ENCODE measurements at regions of chr7 and their contacts with region 1.

Region 1: DNA sequence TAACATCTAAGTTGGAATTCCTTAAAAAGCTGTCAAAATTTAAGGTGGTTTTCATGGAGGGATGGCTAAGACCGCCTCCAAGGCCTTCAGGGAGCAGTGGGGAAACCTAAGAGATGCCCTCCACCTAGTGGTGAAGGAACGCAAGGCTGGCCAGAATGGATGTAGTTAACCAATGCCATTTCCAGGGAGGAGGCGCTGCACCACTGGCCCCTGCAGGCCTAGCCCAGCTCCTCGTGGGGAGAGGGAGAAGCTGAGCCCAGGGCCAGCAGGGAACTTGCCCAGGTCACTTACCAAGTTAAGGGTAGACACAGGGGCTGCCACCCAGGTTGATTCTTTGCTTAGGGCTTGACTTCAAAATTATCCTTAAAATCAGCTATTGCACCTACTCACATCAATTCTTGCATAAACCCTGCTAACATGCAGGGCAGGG is 32.0 kb downstream of the FIGNL1 start:
- DNase-seq: peak; percentile 75 to 82
- H3K4me3 ChIP-seq: no peak overlapping the region
- H3K27ac ChIP-seq: no peak overlapping the region
- H3K4me1 ChIP-seq: peaks cover 0 to 8% (median 4%) of the 10 kb centered on the region in 4 experiments; a peak in 5 of 7 replicates
- H3K27me3 ChIP-seq: no peaks in the 10 kb centered on the region; a peak in 1 of 7 replicates
- CTCF ChIP-seq: peak; percentile 87 to 99 (median 98)
- EP300 ChIP-seq: no peak
- POLR2A ChIP-seq: no peak
- RAD21 ChIP-seq: peak; percentile 92 to 94

Region 2: GRCh38 chr7:50206453-50207250 is 211.4 kb before region 1 on chr7:
- CTCF ChIA-PET with region 1: interaction called, 36 read pairs
- POLR2A ChIA-PET with region 1: no interaction called
- DNase-seq: no peak
- H3K4me3 ChIP-seq: no peak overlapping the region
- H3K27ac ChIP-seq: no peak overlapping the region
- H3K4me1 ChIP-seq: no peaks in the 10 kb centered on the region
- H3K27me3 ChIP-seq: no peaks in the 10 kb centered on the region; a peak in 1 of 7 replicates
- CTCF ChIP-seq: no peak
- EP300 ChIP-seq: no peak
- POLR2A ChIP-seq: no peak
- RAD21 ChIP-seq: no peak

Region 3: GRCh38 chr7:50369143-50370026 is 48.7 kb before region 1 on chr7:
- CTCF ChIA-PET with region 1: interaction called, 22 read pairs
- POLR2A ChIA-PET with region 1: no interaction called
- DNase-seq: no peak
- H3K4me3 ChIP-seq: no peak overlapping the region
- H3K27ac ChIP-seq: no peak overlapping the region
- H3K4me1 ChIP-seq: no peaks in the 10 kb centered on the region
- H3K27me3 ChIP-seq: no peaks in the 10 kb centered on the region
- CTCF ChIP-seq: peak; percentile 49 to 91 (median 84)
- EP300 ChIP-seq: no peak
- POLR2A ChIP-seq: no peak
- RAD21 ChIP-seq: peak; percentile 96

Region 4: GRCh38 chr7:50379082-50379481 is 39.0 kb before region 1 on chr7:
- CTCF ChIA-PET with region 1: interaction called, 11 read pairs
- POLR2A ChIA-PET with region 1: no interaction called
- DNase-seq: peak; percentile 51 to 62
- H3K4me3 ChIP-seq: peak overlapping the region in 3 of 4 experiments; percentile 29 to 43 (median 40); a peak in 5 of 8 replicates
- H3K27ac ChIP-seq: peak overlapping the region; percentile 82; the same call in 1 of the 2 replicates
- H3K4me1 ChIP-seq: peaks cover 6 to 27% (median 19%) of the 10 kb centered on the region in 4 experiments
- H3K27me3 ChIP-seq: no peaks in the 10 kb centered on the region
- CTCF ChIP-seq: no peak
- EP300 ChIP-seq: no peak
- POLR2A ChIP-seq: peak; percentile 57 to 76
- RAD21 ChIP-seq: no peak

Region 5: GRCh38 chr7:50404392-50404791 is 13.7 kb before region 1 on chr7:
- CTCF ChIA-PET with region 1: interaction called, 50 read pairs
- POLR2A ChIA-PET with region 1: no interaction called
- DNase-seq: no peak
- H3K4me3 ChIP-seq: no peak overlapping the region
- H3K27ac ChIP-seq: no peak overlapping the region
- H3K4me1 ChIP-seq: no peaks in the 10 kb centered on the region
- H3K27me3 ChIP-seq: no peaks in the 10 kb centered on the region; a peak in 1 of 7 replicates
- CTCF ChIP-seq: peak; percentile 23 to 47 (median 45); a peak in 3 of 4 replicates
- EP300 ChIP-seq: no peak
- POLR2A ChIP-seq: no peak
- RAD21 ChIP-seq: no peak; a peak in 2 of 4 replicates

Region 6: DNA sequence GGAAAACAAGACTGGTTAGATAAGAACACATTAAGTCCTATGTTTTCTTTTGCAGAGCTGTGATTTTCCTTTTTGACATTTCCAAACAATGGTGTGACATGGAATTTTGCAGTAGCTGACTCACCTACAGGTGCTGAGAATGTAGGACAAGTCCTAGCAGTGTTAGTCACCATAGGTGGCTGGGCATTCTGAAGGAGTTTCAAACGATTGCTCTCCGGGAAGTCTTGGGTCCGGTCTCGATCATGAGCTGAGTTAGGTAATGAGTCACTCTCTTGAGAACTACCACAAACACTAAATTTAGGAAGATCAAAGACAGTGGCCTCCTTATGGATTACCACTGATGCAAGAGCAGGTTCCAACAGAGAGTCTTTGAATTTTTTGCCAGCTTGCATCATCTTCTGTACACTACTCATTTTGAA is 28.4 kb after region 1 on chr7:
- CTCF ChIA-PET with region 1: interaction called, 18 read pairs
- POLR2A ChIA-PET with region 1: no interaction called
- DNase-seq: no peak
- H3K4me3 ChIP-seq: no peak overlapping the region
- H3K27ac ChIP-seq: no peak overlapping the region
- H3K4me1 ChIP-seq: peaks cover 2 to 5% (median 3%) of the 10 kb centered on the region in 4 experiments; a peak in 6 of 7 replicates
- H3K27me3 ChIP-seq: peaks cover 0 to 5% (median 5%) of the 10 kb centered on the region in 4 experiments; a peak in 4 of 7 replicates
- CTCF ChIP-seq: no peak
- EP300 ChIP-seq: no peak
- POLR2A ChIP-seq: no peak
- RAD21 ChIP-seq: no peak

Measured in H1 (cell line).